CD4-positive, alpha-beta memory T cell (primary cell): ENCODE measurements at regions of chr14 and their contacts with region 1.

Region 1: DNA sequence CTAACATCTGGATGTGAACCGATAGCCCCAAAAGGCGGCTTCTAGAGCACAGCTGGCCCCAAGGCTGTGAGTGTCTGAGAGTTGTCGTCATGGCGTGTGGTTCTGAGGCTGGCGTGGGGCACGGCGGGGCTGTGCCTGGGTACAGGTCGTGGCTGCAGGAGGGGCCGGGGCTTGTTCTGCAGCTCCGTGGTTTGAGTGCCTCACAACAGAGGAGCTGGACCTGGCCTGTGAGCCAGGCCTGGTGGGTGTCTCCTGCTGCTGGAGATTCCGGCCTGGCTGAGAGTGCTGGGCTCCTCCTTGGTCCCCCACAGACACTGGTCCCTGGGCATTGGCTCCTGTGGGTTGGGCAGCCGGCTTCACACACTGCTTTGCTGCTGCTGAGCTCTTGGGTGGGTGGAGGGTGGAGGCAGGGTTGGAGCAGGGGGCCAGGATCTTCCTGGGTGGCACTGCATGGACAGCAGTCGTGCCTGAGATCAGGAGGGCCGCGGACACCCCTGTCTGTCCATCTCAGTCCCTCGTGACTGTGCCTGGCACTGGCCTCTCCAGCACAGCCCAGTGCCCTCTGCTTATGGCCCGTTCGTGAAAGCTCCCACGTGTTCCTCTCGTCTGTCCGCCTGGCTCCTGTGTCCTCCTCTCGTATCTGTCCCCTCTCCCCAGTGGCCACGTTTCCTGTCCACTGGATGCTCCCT is 31.8 kb upstream of the TEX22 start:
- DNase-seq: no peak
- H3K4me3 ChIP-seq: no peak overlapping the region
- H3K4me3 Mint-ChIP-seq: no peak overlapping the region
- H3K27ac ChIP-seq: no peak overlapping the region
- H3K27ac Mint-ChIP-seq: no peak overlapping the region
- H3K4me1 ChIP-seq: peaks cover 8% of the 10 kb centered on the region
- H3K4me1 Mint-ChIP-seq: peaks cover 9 to 17% (median 13%) of the 10 kb centered on the region in 4 donors
- H3K27me3 ChIP-seq: no peaks in the 10 kb centered on the region
- H3K27me3 Mint-ChIP-seq: no peaks in the 10 kb centered on the region

Region 2: GRCh38 chr14:105340821-105341733 is 25.5 kb before region 1 on chr14:
- CTCF ChIA-PET with region 1: no interaction called
- POLR2A ChIA-PET with region 1: no interaction called
- intact Hi-C with region 1: no loop called
- DNase-seq: no peak
- H3K4me3 ChIP-seq: no peak overlapping the region
- H3K4me3 Mint-ChIP-seq: no peak overlapping the region
- H3K27ac ChIP-seq: no peak overlapping the region
- H3K27ac Mint-ChIP-seq: peak overlapping the region in 2 of 7 donors; percentile 22 to 64
- H3K4me1 ChIP-seq: no peaks in the 10 kb centered on the region
- H3K4me1 Mint-ChIP-seq: peaks cover 3 to 15% (median 7%) of the 10 kb centered on the region in 4 donors
- H3K27me3 ChIP-seq: no peaks in the 10 kb centered on the region
- H3K27me3 Mint-ChIP-seq: no peaks in the 10 kb centered on the region

Region 3: DNA sequence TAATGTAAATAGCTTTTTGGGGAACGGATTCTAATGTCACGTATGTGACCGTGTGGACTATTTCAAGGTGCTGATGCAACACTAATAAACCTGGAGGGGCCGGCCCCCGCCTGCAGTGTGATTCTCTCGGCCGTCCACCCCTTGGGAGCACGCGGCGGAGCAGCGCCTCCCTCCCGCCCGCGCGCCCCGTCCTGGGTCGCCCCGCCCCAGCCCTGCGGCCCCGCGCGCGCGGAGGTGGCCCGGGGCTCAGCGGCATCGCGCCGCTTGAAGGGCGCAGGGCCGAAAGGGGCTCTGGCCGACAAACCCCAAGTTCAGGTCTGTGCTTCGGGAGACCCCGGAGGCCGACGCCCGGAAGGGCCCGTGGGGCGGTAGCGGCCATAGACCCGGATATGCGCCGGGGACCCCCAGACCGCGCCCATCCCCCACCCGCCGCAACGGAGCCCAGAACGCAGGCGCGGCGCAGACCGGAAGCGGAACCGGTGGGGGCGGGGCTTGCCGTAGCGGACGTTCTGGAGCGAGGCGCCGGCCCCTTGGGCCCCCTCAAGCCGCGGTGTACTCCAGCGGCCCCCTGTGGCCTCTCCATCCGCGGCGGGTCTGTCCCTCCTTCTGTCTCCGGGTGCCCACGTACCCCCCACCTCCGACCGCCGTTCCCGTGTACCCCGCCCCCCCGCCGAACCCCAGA is 31.7 kb after region 1 on chr14 and contains the start of gene TEX22:
- CTCF ChIA-PET with region 1: no interaction called
- POLR2A ChIA-PET with region 1: interaction called, 3 read pairs
- intact Hi-C with region 1: loop called (anchors 2 kb)
- DNase-seq: peak; percentile 79 to 86 (median 79)
- H3K4me3 ChIP-seq: peak within 1 kb of the TSS; percentile 57 to 74
- H3K4me3 Mint-ChIP-seq: peak within 1 kb of the TSS; percentile 77 to 85 (median 82)
- H3K27ac ChIP-seq: peak within 1 kb of the TSS; percentile 80
- H3K27ac Mint-ChIP-seq: peak within 1 kb of the TSS; percentile 58 to 90 (median 82)
- H3K4me1 ChIP-seq: peaks cover 18% of the 10 kb centered on the region
- H3K4me1 Mint-ChIP-seq: peaks cover 4 to 18% (median 10%) of the 10 kb centered on the region in 4 donors
- H3K27me3 ChIP-seq: no peaks in the 10 kb centered on the region
- H3K27me3 Mint-ChIP-seq: no peaks in the 10 kb centered on the region
- total RNA-seq, gene TEX22: 4.7 to 7.5 TPM

Region 4: DNA sequence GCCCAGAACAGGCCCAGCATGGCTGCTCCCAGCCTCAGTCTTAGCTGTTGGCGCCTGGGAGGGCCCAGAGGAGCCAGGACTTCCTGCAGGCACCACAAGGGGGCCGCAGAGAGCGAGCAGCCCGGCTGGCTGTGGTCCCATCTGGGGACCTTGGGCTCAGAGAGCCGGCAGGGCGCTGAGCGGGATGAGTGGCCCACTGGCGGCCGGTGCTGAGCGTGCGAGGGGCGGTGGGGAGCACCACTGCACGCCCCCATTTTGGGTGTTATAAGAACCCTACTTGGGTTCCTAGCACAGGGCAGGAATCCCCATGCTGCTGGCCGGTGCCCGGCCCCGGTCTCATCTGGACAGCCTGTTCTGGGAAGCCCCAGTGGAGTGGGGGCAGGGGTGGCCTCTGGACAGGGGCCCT is 82.2 kb after region 1 on chr14:
- CTCF ChIA-PET with region 1: interaction called, 15 read pairs
- POLR2A ChIA-PET with region 1: interaction called, 3 read pairs
- intact Hi-C with region 1: loop called (anchors 10 kb)
- DNase-seq: peak; percentile 52 to 77 (median 64)
- H3K4me3 ChIP-seq: no peak overlapping the region
- H3K4me3 Mint-ChIP-seq: no peak overlapping the region
- H3K27ac ChIP-seq: no peak overlapping the region
- H3K27ac Mint-ChIP-seq: peak overlapping the region in 2 of 7 donors; percentile 15 to 42
- H3K4me1 ChIP-seq: no peaks in the 10 kb centered on the region
- H3K4me1 Mint-ChIP-seq: no peaks in the 10 kb centered on the region
- H3K27me3 ChIP-seq: no peaks in the 10 kb centered on the region
- H3K27me3 Mint-ChIP-seq: no peaks in the 10 kb centered on the region

Region 5: GRCh38 chr14:105480952-105481801 is 114.6 kb after region 1 on chr14:
- CTCF ChIA-PET with region 1: interaction called, 15 read pairs
- POLR2A ChIA-PET with region 1: interaction called, 6 read pairs
- intact Hi-C with region 1: loop called (anchors 2 kb)
- DNase-seq: peak; percentile 89 to 95 (median 90)
- H3K4me3 ChIP-seq: peak overlapping the region; percentile 49 to 80
- H3K4me3 Mint-ChIP-seq: peak overlapping the region; percentile 83 to 92 (median 86)
- H3K27ac ChIP-seq: peak overlapping the region; percentile 97
- H3K27ac Mint-ChIP-seq: peak overlapping the region; percentile 96 to 100 (median 100)
- H3K4me1 ChIP-seq: peaks cover 82% of the 10 kb centered on the region
- H3K4me1 Mint-ChIP-seq: peaks cover 31 to 78% (median 57%) of the 10 kb centered on the region in 4 donors
- H3K27me3 ChIP-seq: no peaks in the 10 kb centered on the region
- H3K27me3 Mint-ChIP-seq: no peaks in the 10 kb centered on the region

Region 6: GRCh38 chr14:105527661-105528581 is 161.4 kb after region 1 on chr14:
- CTCF ChIA-PET with region 1: interaction called, 24 read pairs
- POLR2A ChIA-PET with region 1: interaction called, 6 read pairs
- intact Hi-C with region 1: loop called (anchors 1 kb)
- DNase-seq: peak; percentile 69 to 83 (median 78)
- H3K4me3 ChIP-seq: peak overlapping the region in 1 of 2 donors; percentile 54
- H3K4me3 Mint-ChIP-seq: peak overlapping the region; percentile 27 to 84 (median 66)
- H3K27ac ChIP-seq: no peak overlapping the region
- H3K27ac Mint-ChIP-seq: peak overlapping the region in 4 of 7 donors; percentile 43 to 83 (median 57)
- H3K4me1 ChIP-seq: peaks cover 29% of the 10 kb centered on the region
- H3K4me1 Mint-ChIP-seq: peaks cover 4 to 41% (median 19%) of the 10 kb centered on the region in 4 donors
- H3K27me3 ChIP-seq: no peaks in the 10 kb centered on the region
- H3K27me3 Mint-ChIP-seq: peaks cover 1 to 2% of the 10 kb centered on the region in 2 donors

Region 7: GRCh38 chr14:105537369-105538164 is 171.0 kb after region 1 on chr14:
- CTCF ChIA-PET with region 1: interaction called, 13 read pairs
- POLR2A ChIA-PET with region 1: no interaction called
- intact Hi-C with region 1: no loop called
- DNase-seq: peak in 4 of 5 donors; percentile 58 to 73 (median 61)
- H3K4me3 ChIP-seq: no peak overlapping the region
- H3K4me3 Mint-ChIP-seq: no peak overlapping the region
- H3K27ac ChIP-seq: no peak overlapping the region
- H3K27ac Mint-ChIP-seq: peak overlapping the region in 1 of 7 donors; percentile 78
- H3K4me1 ChIP-seq: peaks cover 7% of the 10 kb centered on the region
- H3K4me1 Mint-ChIP-seq: peaks cover 0 to 6% (median 3%) of the 10 kb centered on the region in 4 donors
- H3K27me3 ChIP-seq: no peaks in the 10 kb centered on the region
- H3K27me3 Mint-ChIP-seq: peaks cover 2 to 13% of the 10 kb centered on the region in 2 donors

Region 8: GRCh38 chr14:105974902-105975301 is 608.4 kb after region 1 on chr14:
- CTCF ChIA-PET with region 1: no interaction called
- POLR2A ChIA-PET with region 1: no interaction called
- intact Hi-C with region 1: no loop called
- DNase-seq: peak; percentile 29 to 50 (median 38)
- H3K4me3 ChIP-seq: no peak overlapping the region
- H3K4me3 Mint-ChIP-seq: no peak overlapping the region
- H3K27ac ChIP-seq: no peak overlapping the region
- H3K27ac Mint-ChIP-seq: peak overlapping the region in 2 of 7 donors; percentile 25 to 26
- H3K4me1 ChIP-seq: no peaks in the 10 kb centered on the region
- H3K4me1 Mint-ChIP-seq: peaks cover 0 to 8% (median 5%) of the 10 kb centered on the region in 4 donors
- H3K27me3 ChIP-seq: peaks cover 9% of the 10 kb centered on the region
- H3K27me3 Mint-ChIP-seq: peaks cover 5 to 17% of the 10 kb centered on the region in 2 donors